Heart left ventricle (tissue), 16 donors: ENCODE measurements at regions of chr12 and their contacts with region 1.

Region 1: DNA sequence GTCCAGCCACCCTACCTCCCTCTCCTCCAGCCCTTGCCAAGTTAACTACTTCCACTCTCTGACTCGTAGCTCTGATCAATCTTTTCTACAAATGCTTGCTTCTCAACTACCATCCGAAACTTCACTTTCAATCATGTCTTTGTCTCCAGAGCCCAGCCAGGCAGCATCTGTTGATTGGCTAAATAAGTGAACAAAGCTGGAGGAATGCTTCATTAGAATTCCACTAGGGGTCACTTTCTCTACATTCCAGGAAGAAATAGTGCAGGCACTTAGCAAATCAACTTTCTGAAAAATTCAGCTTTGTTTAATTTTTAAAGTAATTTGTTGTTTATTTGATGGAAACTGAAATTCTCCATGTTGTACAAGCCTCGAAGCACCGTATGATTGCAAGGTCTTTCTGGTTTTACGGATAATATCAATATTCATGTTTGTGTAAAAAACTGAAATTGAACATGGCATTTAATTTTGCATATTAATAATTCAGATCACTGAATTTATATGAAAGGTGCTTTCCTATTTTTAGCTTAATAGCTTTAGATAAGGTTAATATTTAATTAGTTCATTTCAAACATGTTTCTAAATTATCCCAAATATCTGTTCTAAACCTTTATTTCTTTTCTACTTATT is 32.4 kb upstream of the HELB start:
- DNase-seq: no peak
- ATAC-seq: peak in 1 of 4 donors; percentile 47
- H3K4me3 ChIP-seq: no peak overlapping the region
- H3K27ac ChIP-seq: peak overlapping the region in 1 of 12 donors; percentile 76
- H3K4me1 ChIP-seq: peaks cover 0 to 26% (median 0%) of the 10 kb centered on the region in 12 donors
- H3K27me3 ChIP-seq: peaks cover 0 to 8% (median 0%) of the 10 kb centered on the region in 9 donors
- CTCF ChIP-seq: peak; percentile 14 to 70 (median 53)
- POLR2A ChIP-seq: no peak

Region 2: DNA sequence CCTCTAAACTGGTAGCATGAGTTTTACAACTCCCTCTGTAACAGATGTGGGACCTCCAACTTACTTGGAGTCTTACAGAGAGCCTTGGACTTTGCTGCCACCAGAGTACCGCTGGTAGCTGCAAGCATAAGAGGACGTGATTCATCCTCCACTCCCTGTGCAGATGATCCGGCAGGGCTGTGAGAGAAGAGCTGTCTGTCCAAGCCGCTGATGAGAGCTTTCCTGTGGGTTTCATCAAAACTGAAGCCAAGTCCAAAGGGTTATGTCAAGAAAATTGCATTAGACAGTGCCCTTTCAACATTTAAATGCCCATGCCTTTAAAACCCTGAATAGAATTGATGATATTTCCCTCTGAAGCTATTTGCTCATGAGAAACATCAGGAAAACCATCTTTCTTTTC is 225.1 kb before region 1 on chr12:
- intact Hi-C with region 1: no loop called
- DNase-seq: no peak
- ATAC-seq: no peak
- H3K4me3 ChIP-seq: no peak overlapping the region
- H3K27ac ChIP-seq: no peak overlapping the region
- H3K4me1 ChIP-seq: no peaks in the 10 kb centered on the region
- H3K27me3 ChIP-seq: peaks cover 0 to 3% (median 0%) of the 10 kb centered on the region in 9 donors
- CTCF ChIP-seq: no peak
- POLR2A ChIP-seq: no peak

Region 3: GRCh38 chr12:66563220-66563619 is 293.4 kb after region 1 on chr12:
- intact Hi-C with region 1: no loop called
- DNase-seq: no peak
- ATAC-seq: no peak
- H3K4me3 ChIP-seq: no peak overlapping the region
- H3K27ac ChIP-seq: no peak overlapping the region
- H3K4me1 ChIP-seq: no peaks in the 10 kb centered on the region
- H3K27me3 ChIP-seq: no peaks in the 10 kb centered on the region
- CTCF ChIP-seq: no peak
- POLR2A ChIP-seq: no peak

Region 4: GRCh38 chr12:66708704-66709456 is 439.0 kb after region 1 on chr12:
- intact Hi-C with region 1: loop called in 2 of 10 experiments (anchors 10 kb)
- DNase-seq: no peak
- ATAC-seq: no peak
- H3K4me3 ChIP-seq: no peak overlapping the region
- H3K27ac ChIP-seq: no peak overlapping the region
- H3K4me1 ChIP-seq: peaks cover 0 to 3% (median 0%) of the 10 kb centered on the region in 12 donors
- H3K27me3 ChIP-seq: no peaks in the 10 kb centered on the region
- CTCF ChIP-seq: peak in 10 of 12 donors; percentile 18 to 47 (median 39)
- POLR2A ChIP-seq: no peak

Region 5: DNA sequence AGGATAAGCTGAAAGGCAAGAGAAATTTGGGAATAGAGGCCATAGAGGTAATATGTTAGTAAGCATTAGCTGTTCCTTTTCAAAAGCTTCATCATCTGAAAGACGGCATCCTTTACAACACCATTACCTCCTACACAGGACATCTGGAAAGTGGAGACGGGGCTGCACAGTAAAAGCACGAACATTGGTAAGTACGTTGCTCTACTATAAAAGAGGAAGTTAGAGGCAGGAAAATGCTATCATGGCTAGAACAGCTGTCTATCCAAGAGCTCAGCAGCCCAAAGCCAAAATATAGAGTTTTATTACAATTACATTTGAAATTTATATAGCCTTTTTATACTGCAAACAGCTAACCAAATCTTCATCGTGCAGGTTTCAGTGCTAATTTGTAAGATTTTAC is 581.3 kb after region 1 on chr12:
- intact Hi-C with region 1: loop called in 1 of 10 experiments (anchors 10 kb)
- DNase-seq: no peak
- ATAC-seq: no peak
- H3K4me3 ChIP-seq: no peak overlapping the region
- H3K27ac ChIP-seq: no peak overlapping the region
- H3K4me1 ChIP-seq: no peaks in the 10 kb centered on the region
- H3K27me3 ChIP-seq: no peaks in the 10 kb centered on the region
- CTCF ChIP-seq: no peak
- POLR2A ChIP-seq: no peak